ENCODE measurements at regions of chr17 and their contacts with region 1.

Region 1: DNA sequence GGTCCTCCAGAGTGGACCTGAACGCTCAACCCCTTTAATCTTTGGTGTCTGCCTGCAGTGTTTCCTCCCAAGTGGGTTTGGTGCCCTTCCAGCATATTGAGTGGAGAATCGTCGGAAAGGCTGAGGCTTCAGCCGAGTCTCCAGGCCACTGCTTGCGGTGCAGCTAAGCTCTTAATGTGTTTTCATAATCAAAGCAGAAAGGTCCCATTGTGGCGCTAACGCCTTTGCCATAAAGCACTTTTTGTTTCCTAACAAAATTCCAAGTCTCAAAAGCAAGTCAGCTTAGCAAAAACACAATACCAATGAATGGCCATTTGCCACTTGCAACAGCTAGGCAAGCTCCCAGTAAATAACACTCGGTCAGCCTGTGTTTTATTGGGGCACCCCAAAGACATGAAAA is 57.6 kb downstream of the KSR1 start:
- DNase-seq: no peak
- ATAC-seq: peak; percentile 22
- H3K4me3 Mint-ChIP-seq: no peak overlapping the region; the same call in 1 of the 2 replicates
- H3K27ac Mint-ChIP-seq: peak overlapping the region; percentile 89
- H3K4me1 Mint-ChIP-seq: peaks cover 80% of the 10 kb centered on the region
- H3K27me3 Mint-ChIP-seq: no peaks in the 10 kb centered on the region
- CTCF ChIP-seq: no peak

Region 2: GRCh38 chr17:27494192-27495091 is 19.4 kb before region 1 on chr17:
- CTCF ChIA-PET with region 1: interaction called, 10 read pairs
- POLR2A ChIA-PET with region 1: no interaction called
- DNase-seq: no peak
- ATAC-seq: peak; percentile 34
- H3K4me3 Mint-ChIP-seq: peak overlapping the region; percentile 25
- H3K27ac Mint-ChIP-seq: peak overlapping the region; percentile 93
- H3K4me1 Mint-ChIP-seq: peaks cover 86% of the 10 kb centered on the region
- H3K27me3 Mint-ChIP-seq: no peaks in the 10 kb centered on the region
- CTCF ChIP-seq: no peak